ENCODE measurements at regions of chr12 and their contacts with region 1.

Region 1: DNA sequence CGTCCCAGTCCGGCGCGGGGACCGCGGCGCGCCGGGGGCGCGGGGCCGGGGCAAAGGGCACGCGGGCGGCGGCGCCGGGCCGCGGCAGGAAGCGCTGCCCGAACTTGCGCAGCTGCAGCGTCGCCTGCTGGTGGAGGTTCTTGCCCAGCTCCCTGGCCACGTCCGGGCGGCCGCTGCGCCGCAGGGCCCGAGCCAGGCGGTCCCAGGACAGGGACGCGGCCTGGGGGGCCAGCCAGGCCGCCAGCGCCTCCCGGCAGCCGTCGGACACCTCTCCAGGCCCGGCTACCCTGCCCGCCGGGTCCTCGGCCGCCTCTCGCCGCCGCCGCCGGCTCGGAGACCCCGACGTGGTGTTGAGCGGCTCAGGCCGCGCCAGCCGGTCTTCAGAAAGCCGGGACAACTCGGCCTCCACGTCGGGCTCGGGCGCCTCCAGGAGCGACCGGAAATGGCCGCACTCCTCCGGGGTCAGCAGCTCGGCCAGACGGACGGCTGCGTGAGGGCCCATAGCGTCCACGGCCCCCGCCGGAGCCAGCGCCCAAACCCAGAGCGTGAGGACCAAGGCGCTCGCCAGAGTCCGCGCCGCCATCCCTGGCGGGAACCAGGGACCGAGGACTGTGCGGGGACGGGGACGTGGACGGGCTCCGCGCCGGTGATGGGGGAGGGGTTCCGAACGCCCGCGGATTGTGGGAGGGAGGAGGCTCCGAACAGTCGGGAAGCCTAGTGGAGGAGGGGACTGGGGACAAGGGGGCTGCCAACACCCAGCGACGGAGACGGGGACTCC is 34.0 kb downstream of the FIGNL2 start:
- DNase-seq: peak; percentile 76
- ATAC-seq: peak; percentile 63
- H3K4me3 Mint-ChIP-seq: peak overlapping the region; percentile 66
- H3K27ac Mint-ChIP-seq: no peak overlapping the region
- H3K4me1 Mint-ChIP-seq: peaks cover 15% of the 10 kb centered on the region
- H3K27me3 Mint-ChIP-seq: peaks cover 60% of the 10 kb centered on the region
- CTCF ChIP-seq: 0 out of 2 replicates have a peak, but pooled peaks have one; percentile 15

Region 2: DNA sequence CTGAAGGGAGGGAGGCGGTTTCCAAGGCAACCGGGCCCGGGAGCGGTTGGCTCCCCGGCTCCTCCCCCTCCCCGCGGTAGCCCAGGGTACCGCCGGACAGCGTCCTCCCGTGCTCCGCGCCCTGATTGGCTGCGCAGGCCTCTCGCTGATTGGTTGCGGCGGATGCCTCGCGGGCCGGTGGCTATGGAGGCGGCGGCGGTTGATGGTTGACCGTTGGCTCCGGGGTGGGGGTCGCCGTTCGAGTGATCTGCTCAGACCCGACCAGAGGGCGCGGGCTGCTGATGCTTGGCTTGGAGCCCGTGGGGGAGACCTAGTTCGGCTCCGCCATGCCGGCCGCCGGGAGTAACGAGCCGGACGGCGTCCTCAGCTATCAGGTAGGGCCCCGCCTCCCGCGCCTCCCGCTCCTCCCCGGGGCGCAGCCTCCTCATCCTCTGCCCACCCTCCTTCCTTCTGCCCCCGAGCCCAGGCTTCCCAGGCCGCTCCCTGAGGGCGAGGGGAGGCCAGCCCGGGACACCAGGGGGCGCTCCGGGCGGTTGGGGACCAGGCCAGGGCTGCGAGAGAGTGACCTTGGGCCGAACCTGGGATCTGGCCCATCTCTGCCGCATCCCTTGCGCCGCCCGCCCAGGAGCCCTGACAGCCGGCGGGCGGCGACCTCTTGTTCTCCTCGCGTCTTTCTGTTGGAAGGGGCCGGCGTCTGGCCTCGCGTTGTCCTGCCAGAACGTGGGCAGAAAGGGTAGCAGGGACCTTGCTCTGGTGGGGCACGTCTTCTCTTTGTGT is 389.6 kb before region 1 on chr12 and contains the start of gene SLC4A8:
- CTCF ChIA-PET with region 1: interaction called, 15 read pairs
- POLR2A ChIA-PET with region 1: no interaction called
- DNase-seq: peak; percentile 99
- ATAC-seq: peak; percentile 92
- H3K4me3 Mint-ChIP-seq: peak within 1 kb of the TSS; percentile 77
- H3K27ac Mint-ChIP-seq: no peak within 1 kb of the TSS
- H3K4me1 Mint-ChIP-seq: peaks cover 38% of the 10 kb centered on the region
- H3K27me3 Mint-ChIP-seq: no peaks in the 10 kb centered on the region
- CTCF ChIP-seq: peak; percentile 62
- total RNA-seq, gene SLC4A8: 13.1 to 23.5 TPM (median 16.9 TPM) in 3 replicates

Region 3: GRCh38 chr12:51714666-51715065 is 99.8 kb before region 1 on chr12:
- CTCF ChIA-PET with region 1: no interaction called
- POLR2A ChIA-PET with region 1: no interaction called
- DNase-seq: no peak
- ATAC-seq: no peak
- H3K4me3 Mint-ChIP-seq: no peak overlapping the region
- H3K27ac Mint-ChIP-seq: no peak overlapping the region
- H3K4me1 Mint-ChIP-seq: no peaks in the 10 kb centered on the region
- H3K27me3 Mint-ChIP-seq: no peaks in the 10 kb centered on the region
- CTCF ChIP-seq: no peak

Region 4: GRCh38 chr12:51726931-51727330 is 87.6 kb before region 1 on chr12:
- CTCF ChIA-PET with region 1: no interaction called
- POLR2A ChIA-PET with region 1: no interaction called
- DNase-seq: no peak
- ATAC-seq: no peak
- H3K4me3 Mint-ChIP-seq: no peak overlapping the region
- H3K27ac Mint-ChIP-seq: no peak overlapping the region
- H3K4me1 Mint-ChIP-seq: no peaks in the 10 kb centered on the region; the same call in 1 of the 2 replicates
- H3K27me3 Mint-ChIP-seq: peaks cover 5% of the 10 kb centered on the region
- CTCF ChIP-seq: no peak

Region 5: DNA sequence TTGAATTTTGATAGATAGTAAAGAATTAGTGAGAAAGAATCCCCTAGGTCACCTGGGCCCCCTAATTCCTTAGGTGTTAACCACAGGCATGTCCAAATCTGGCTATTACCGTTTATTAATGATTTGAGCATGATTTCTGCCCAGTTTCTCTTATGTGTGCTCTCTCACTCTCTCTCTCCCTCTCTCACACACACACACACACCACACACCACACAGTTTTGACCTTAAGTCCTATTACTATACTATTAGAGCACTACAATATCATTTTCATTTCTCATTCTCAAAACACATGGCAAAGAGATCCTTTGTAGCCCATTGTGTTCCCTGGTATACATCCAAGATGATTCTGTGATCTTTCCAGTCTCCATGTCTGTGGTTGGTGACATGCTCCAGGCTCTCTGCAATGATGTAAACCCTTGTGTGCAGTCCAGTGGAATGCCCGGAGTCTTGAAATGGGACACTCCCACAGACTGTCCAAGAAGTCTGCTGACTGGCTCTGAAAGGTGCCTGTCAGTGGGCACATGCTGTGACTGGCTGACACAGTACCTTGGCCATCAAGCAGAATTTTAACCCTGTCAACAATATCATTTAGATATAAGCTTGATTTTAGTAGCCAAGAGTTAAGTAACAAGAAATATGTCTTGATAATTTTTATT is 62.1 kb before region 1 on chr12:
- CTCF ChIA-PET with region 1: no interaction called
- POLR2A ChIA-PET with region 1: no interaction called
- DNase-seq: no peak
- ATAC-seq: no peak
- H3K4me3 Mint-ChIP-seq: no peak overlapping the region
- H3K27ac Mint-ChIP-seq: no peak overlapping the region
- H3K4me1 Mint-ChIP-seq: peaks cover 6% of the 10 kb centered on the region
- H3K27me3 Mint-ChIP-seq: no peaks in the 10 kb centered on the region
- CTCF ChIP-seq: no peak

Region 6: GRCh38 chr12:51801027-51801426 is 13.5 kb before region 1 on chr12:
- CTCF ChIA-PET with region 1: interaction called, 33 read pairs
- POLR2A ChIA-PET with region 1: no interaction called
- DNase-seq: no peak
- ATAC-seq: no peak
- H3K4me3 Mint-ChIP-seq: no peak overlapping the region
- H3K27ac Mint-ChIP-seq: no peak overlapping the region
- H3K4me1 Mint-ChIP-seq: no peaks in the 10 kb centered on the region
- H3K27me3 Mint-ChIP-seq: no peaks in the 10 kb centered on the region
- CTCF ChIP-seq: no peak

Region 7: DNA sequence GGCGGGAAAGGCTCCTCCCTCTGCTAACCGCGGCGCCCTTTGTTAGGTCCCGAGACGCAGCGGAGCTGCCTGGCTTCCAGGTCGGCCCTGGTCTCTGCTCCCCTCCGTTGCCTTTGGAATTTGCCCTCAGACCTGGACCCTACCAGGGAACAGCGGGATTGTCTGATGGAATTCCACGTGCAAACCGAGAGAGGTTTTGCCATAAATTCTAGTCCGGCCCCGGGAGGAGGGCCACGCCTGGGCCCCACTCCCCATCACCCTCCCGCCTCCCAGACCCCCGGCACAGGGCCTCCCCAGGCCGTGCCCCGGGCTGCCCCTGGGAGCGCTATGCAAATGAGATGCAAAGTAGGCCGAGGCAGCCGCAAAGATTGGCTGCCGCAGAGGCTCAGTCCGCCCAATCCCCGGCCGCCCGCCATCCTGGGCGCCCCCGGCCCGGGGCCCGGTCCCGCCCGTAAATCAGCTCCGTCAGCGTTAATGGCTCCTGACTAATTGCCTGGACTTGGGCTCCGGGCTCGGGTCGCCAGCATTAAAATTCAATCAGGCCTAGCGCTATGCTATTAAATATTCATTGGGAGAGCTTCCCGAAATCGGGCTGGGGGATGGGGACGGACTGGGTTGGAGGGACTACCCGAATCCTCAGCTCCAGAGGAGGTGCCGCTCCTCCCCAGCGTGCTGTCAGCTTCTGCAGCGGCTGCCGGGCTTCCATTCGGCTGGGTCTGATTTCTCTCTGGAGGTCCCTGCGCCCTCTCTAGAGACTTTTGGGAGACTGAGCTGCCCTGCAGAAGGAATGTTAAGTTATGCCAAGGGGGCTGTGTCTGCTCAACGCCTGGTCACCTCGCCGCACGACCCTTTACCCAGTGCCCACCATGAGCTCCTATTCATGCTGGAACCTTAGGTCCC is 49.7 kb after region 1 on chr12:
- CTCF ChIA-PET with region 1: interaction called, 164 read pairs
- POLR2A ChIA-PET with region 1: interaction called, 3 read pairs
- DNase-seq: peak; percentile 88
- ATAC-seq: peak; percentile 86
- H3K4me3 Mint-ChIP-seq: peak overlapping the region; percentile 80
- H3K27ac Mint-ChIP-seq: no peak overlapping the region
- H3K4me1 Mint-ChIP-seq: peaks cover 52% of the 10 kb centered on the region
- H3K27me3 Mint-ChIP-seq: peaks cover 65% of the 10 kb centered on the region
- CTCF ChIP-seq: no peak